ENCODE measurements at regions of chr5 and their contacts with region 1.

Region 1: DNA sequence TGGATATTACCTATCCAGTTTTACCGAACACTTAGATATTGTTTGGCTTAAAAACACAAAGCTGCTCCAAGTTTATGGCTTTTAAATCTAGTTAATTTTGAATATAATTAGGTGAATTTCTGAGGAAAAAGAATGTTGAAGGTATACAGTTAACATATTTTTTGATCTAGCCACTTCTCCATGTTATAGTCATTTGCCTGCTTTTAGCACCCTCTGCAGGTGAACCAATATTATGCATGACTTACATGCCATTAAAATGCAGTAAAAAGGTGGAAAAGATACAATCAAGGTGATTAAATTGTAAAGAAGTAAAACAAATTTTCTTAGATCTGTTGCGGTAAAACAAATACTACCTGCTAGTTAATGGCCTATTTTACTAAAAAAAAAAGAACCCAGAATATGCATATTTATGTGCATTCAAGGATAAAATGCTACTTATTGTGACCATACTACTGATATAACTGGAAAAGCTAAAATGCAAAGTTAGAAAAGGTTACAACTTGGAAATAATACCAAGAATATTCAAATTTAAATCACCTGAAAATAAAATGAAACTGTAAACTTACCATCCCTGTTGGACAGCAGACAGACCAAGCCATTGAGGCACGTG is 132.1 kb downstream of the AP3B1 start:
- DNase-seq: peak; percentile 56
- H3K4me3 ChIP-seq: no peak overlapping the region
- H3K27ac ChIP-seq: no peak overlapping the region
- H3K4me1 ChIP-seq: no peaks in the 10 kb centered on the region
- H3K27me3 ChIP-seq: no peaks in the 10 kb centered on the region
- CTCF ChIP-seq: peak; percentile 45 to 47
- POLR2A ChIP-seq: no peak

Region 2: GRCh38 chr5:77560677-77561263 is 601.6 kb before region 1 on chr5:
- CTCF ChIA-PET with region 1: interaction called, 16 read pairs
- POLR2A ChIA-PET with region 1: no interaction called
- dilution Hi-C with region 1: no loop called
- intact Hi-C with region 1: loop called (anchors 2 kb)
- DNase-seq: peak; percentile 58
- H3K4me3 ChIP-seq: no peak overlapping the region
- H3K27ac ChIP-seq: no peak overlapping the region
- H3K4me1 ChIP-seq: no peaks in the 10 kb centered on the region
- H3K27me3 ChIP-seq: peaks cover 8 to 35% of the 10 kb centered on the region in 2 experiments
- CTCF ChIP-seq: peak; percentile 22 to 46
- POLR2A ChIP-seq: no peak

Region 3: GRCh38 chr5:77645158-77645994 is 517.0 kb before region 1 on chr5:
- CTCF ChIA-PET with region 1: interaction called, 5 read pairs
- POLR2A ChIA-PET with region 1: no interaction called
- dilution Hi-C with region 1: no loop called
- intact Hi-C with region 1: loop called (anchors 2 kb)
- DNase-seq: no peak
- H3K4me3 ChIP-seq: no peak overlapping the region
- H3K27ac ChIP-seq: no peak overlapping the region
- H3K4me1 ChIP-seq: peaks cover 5% of the 10 kb centered on the region
- H3K27me3 ChIP-seq: peaks cover 69 to 94% of the 10 kb centered on the region in 2 experiments
- CTCF ChIP-seq: peak; percentile 51 to 63
- POLR2A ChIP-seq: no peak

Region 4: GRCh38 chr5:77867194-77867691 is 295.1 kb before region 1 on chr5:
- CTCF ChIA-PET with region 1: interaction called, 8 read pairs
- POLR2A ChIA-PET with region 1: no interaction called
- dilution Hi-C with region 1: no loop called
- intact Hi-C with region 1: loop called (anchors 1 kb)
- DNase-seq: peak; percentile 40
- H3K4me3 ChIP-seq: no peak overlapping the region
- H3K27ac ChIP-seq: no peak overlapping the region
- H3K4me1 ChIP-seq: no peaks in the 10 kb centered on the region
- H3K27me3 ChIP-seq: peaks cover 8 to 20% of the 10 kb centered on the region in 2 experiments
- CTCF ChIP-seq: peak; percentile 4 to 9
- POLR2A ChIP-seq: no peak

Region 5: DNA sequence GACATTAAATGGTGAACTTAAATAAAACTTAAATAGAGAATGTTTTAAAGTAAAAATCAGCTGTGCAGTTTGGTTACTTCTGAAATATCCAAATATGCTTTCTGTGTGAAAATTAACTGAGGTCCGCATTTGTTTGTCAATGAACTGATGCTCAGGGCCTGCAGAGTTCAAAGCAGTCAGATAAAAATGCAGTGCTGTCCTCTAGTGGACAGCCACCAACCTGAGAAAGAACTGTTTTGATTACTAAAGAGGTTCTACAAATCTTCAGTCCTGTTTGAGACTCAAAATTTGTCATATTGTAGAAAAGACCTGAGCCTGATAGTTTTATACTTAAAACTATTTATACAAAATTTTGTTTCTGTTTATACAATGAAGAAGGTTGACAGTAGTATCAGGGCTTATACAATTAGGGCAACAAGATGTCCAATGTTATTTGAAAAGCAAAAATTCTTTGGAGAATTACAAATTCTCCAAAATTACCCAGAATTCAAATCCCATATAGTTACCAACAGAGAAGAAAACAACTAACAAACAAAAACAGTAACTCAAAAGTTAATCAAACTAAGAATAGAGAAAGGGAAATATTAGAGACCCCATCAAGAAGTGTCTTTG is 153.9 kb before region 1 on chr5:
- CTCF ChIA-PET with region 1: interaction called, 5 read pairs
- POLR2A ChIA-PET with region 1: no interaction called
- dilution Hi-C with region 1: no loop called
- intact Hi-C with region 1: loop called (anchors 5 kb)
- DNase-seq: peak; percentile 53
- H3K4me3 ChIP-seq: no peak overlapping the region
- H3K27ac ChIP-seq: no peak overlapping the region
- H3K4me1 ChIP-seq: no peaks in the 10 kb centered on the region
- H3K27me3 ChIP-seq: no peaks in the 10 kb centered on the region
- CTCF ChIP-seq: peak; percentile 61 to 62
- POLR2A ChIP-seq: no peak

Region 6: DNA sequence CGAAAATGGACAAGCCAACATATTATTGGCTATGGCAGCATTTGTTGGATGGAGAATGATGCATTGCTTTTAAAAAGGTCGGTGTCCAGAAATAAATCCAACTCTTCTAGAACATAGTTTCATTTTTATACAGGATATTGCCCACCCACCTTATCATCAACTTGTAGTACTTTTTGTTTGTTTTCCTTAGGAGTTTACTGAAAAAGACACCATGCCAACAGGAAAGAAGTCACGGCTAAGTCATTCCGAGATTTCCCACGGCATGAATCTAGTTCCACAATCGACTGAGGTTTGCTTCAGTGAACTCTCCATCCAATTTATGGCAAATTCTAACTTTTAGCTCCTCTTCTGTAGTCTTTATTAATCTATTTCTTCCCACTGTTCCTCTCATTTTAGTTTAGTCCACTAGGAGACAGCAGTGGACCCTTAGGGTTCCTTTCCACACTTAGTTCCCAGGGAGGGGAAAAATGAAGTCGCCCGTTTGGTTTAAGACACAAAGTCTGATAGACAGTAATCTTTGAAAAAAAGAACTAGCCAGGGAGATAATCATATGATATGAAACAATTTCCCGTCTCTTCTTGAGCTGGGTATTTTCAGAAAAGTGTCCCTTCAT is 105.4 kb before region 1 on chr5:
- CTCF ChIA-PET with region 1: interaction called, 3 read pairs
- POLR2A ChIA-PET with region 1: no interaction called
- dilution Hi-C with region 1: no loop called
- intact Hi-C with region 1: loop called (anchors 5 kb)
- DNase-seq: peak; percentile 83
- H3K4me3 ChIP-seq: peak overlapping the region; percentile 15 to 70 (median 28)
- H3K27ac ChIP-seq: peak overlapping the region; percentile 89
- H3K4me1 ChIP-seq: peaks cover 20% of the 10 kb centered on the region
- H3K27me3 ChIP-seq: no peaks in the 10 kb centered on the region
- CTCF ChIP-seq: peak; percentile 34 to 40
- POLR2A ChIP-seq: no peak

Region 7: DNA sequence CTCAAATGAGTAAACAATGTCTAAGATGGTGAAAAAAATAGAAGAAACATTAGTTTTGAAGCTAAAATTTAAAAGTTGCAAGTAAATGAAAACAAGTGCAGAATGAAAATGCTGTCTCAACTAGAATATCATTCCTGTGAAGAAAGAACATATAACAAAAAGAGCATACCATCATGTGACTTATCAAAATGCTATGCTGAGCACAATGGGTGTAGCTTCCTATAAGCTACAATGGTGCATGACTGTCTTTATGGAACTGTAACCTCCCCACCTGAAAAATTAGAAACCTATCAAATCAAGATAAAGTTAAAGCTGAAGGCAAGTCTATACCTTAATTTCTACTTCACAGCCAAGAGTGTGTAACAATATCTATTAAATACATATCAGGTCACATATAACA is 59.9 kb before region 1 on chr5:
- CTCF ChIA-PET with region 1: no interaction called
- POLR2A ChIA-PET with region 1: no interaction called
- dilution Hi-C with region 1: no loop called
- intact Hi-C with region 1: no loop called
- DNase-seq: no peak
- H3K4me3 ChIP-seq: no peak overlapping the region
- H3K27ac ChIP-seq: no peak overlapping the region
- H3K4me1 ChIP-seq: no peaks in the 10 kb centered on the region
- H3K27me3 ChIP-seq: no peaks in the 10 kb centered on the region
- CTCF ChIP-seq: no peak
- POLR2A ChIP-seq: no peak